ENCODE measurements at regions of chr18 and their contacts with region 1.

Region 1: GRCh38 chr18:4181882-4182568 is 273.1 kb downstream of the DLGAP1 start:
- DNase-seq: no peak
- ATAC-seq: peak; percentile 84
- H3K4me3 ChIP-seq: no peak overlapping the region
- H3K27ac ChIP-seq: no peak overlapping the region
- H3K4me1 ChIP-seq: no peaks in the 10 kb centered on the region
- H3K27me3 ChIP-seq: no peaks in the 10 kb centered on the region
- CTCF ChIP-seq: peak in 1 of 3 experiments; percentile 35; a peak in 2 of 6 replicates
- EP300 ChIP-seq: no peak
- POLR2A ChIP-seq: no peak
- RAD21 ChIP-seq: peak; percentile 38

Region 2: GRCh38 chr18:3952031-3952430 is 230.0 kb before region 1 on chr18:
- CTCF ChIA-PET with region 1: no interaction called
- POLR2A ChIA-PET with region 1: no interaction called
- RAD21 ChIA-PET with region 1: no interaction called
- SMC1A ChIA-PET with region 1: no interaction called
- in situ Hi-C with region 1: no loop called
- intact Hi-C with region 1: no loop called
- DNase-seq: no peak
- ATAC-seq: no peak
- H3K4me3 ChIP-seq: no peak overlapping the region
- H3K27ac ChIP-seq: no peak overlapping the region
- H3K4me1 ChIP-seq: no peaks in the 10 kb centered on the region
- H3K27me3 ChIP-seq: no peaks in the 10 kb centered on the region
- CTCF ChIP-seq: no peak
- EP300 ChIP-seq: no peak
- POLR2A ChIP-seq: no peak
- RAD21 ChIP-seq: no peak

Region 3: DNA sequence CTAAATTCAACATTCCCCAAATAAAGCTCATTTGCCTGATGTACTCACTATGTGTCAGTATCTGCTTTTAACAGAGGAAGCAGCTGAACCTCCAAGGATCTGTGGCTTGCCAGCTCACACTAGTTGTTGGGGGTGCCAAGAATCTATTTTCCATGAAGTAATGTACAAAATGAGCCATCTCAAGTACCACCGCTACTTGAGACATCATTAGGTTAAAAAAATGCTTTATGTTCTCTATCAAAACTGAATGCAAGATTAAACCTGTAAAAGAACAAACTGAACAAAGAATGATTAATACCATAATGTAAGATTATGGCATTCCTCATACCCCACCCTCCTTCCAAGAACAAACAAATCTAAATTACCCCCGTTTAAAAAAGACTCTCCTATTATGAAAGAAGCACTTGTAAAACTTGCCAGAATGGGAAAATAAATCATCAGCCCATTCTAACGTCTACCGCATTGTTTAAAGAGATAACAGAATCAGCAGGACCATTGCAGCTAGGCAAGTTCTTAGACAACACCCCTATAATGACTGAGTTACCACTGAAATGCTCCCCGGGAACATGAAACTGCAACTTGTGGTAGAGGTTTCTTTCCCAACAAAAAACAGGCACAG is 198.6 kb before region 1 on chr18:
- CTCF ChIA-PET with region 1: no interaction called
- POLR2A ChIA-PET with region 1: no interaction called
- RAD21 ChIA-PET with region 1: no interaction called
- SMC1A ChIA-PET with region 1: no interaction called
- in situ Hi-C with region 1: no loop called
- intact Hi-C with region 1: no loop called
- DNase-seq: no peak
- ATAC-seq: peak; percentile 11; the same call in 1 of the 3 replicates
- H3K4me3 ChIP-seq: no peak overlapping the region
- H3K27ac ChIP-seq: no peak overlapping the region
- H3K4me1 ChIP-seq: no peaks in the 10 kb centered on the region
- H3K27me3 ChIP-seq: no peaks in the 10 kb centered on the region
- CTCF ChIP-seq: no peak
- EP300 ChIP-seq: no peak
- POLR2A ChIP-seq: no peak
- RAD21 ChIP-seq: no peak

Region 4: DNA sequence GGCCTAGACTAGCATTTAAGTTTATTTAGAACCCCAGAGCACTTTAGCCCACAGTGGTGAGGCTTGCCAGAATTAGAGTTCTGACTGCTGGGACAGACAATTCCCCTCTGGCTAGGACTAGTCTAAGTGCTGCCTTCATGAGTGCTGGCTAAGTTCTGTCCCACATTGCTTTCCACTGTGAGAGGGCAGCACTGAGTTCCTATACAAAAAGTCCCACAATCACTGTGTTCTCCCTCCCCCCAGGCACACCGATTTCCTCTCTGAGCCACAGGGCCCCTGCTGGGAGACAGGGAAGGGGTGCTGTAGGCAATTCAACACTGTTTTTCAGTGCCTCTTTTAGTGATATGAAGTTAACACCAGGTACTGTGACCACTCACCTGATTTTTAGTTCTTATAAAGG is 37.8 kb before region 1 on chr18:
- CTCF ChIA-PET with region 1: no interaction called
- POLR2A ChIA-PET with region 1: no interaction called
- RAD21 ChIA-PET with region 1: no interaction called
- SMC1A ChIA-PET with region 1: no interaction called
- in situ Hi-C with region 1: no loop called
- intact Hi-C with region 1: no loop called
- DNase-seq: no peak
- ATAC-seq: no peak
- H3K4me3 ChIP-seq: no peak overlapping the region
- H3K27ac ChIP-seq: no peak overlapping the region
- H3K4me1 ChIP-seq: no peaks in the 10 kb centered on the region
- H3K27me3 ChIP-seq: no peaks in the 10 kb centered on the region
- CTCF ChIP-seq: no peak
- EP300 ChIP-seq: no peak
- POLR2A ChIP-seq: no peak
- RAD21 ChIP-seq: no peak

Region 5: DNA sequence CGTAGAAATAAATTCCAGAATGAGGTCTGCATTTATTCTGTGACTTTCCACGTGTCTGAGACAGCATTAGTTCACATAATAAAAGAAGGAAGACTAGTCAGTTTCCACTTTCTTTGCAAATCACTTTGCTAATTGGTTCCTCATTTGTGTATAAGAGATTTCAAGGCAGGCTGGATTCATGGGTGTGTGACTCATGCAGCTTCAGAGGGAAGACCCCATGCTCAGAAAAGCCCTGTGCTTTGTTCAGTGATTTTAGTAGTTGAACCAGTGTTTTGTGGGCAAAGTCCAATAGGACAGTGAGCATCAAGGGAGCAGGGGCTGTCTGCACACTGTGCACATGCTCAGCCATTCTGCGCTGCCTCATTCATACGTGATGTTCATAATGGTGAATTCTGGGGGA is 24.7 kb before region 1 on chr18:
- CTCF ChIA-PET with region 1: interaction called, 8 read pairs
- POLR2A ChIA-PET with region 1: interaction called, 3 read pairs
- RAD21 ChIA-PET with region 1: interaction called, 3 read pairs
- SMC1A ChIA-PET with region 1: interaction called, 10 read pairs
- in situ Hi-C with region 1: no loop called
- intact Hi-C with region 1: no loop called
- DNase-seq: peak; percentile 19
- ATAC-seq: peak; percentile 79
- H3K4me3 ChIP-seq: no peak overlapping the region
- H3K27ac ChIP-seq: no peak overlapping the region
- H3K4me1 ChIP-seq: no peaks in the 10 kb centered on the region
- H3K27me3 ChIP-seq: no peaks in the 10 kb centered on the region
- CTCF ChIP-seq: no peak
- EP300 ChIP-seq: no peak
- POLR2A ChIP-seq: no peak
- RAD21 ChIP-seq: no peak

Region 6: DNA sequence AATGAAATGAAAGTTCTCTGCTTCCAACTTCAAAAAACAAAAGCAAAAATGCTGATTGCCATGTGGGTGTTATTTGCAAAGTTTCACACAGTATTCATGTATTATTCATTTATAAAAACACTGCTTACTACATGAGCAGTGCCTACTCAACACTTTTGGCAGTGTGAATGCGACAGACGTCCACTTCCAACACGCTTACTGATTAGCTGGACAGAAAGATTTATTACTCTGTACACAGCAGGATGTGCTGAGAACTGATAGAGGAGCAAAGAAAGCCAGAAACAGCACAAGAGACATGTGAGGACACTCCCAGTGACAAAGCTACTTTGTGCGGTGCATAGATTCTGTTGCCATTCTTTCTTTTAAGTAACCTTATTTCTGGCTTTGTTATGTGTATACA is 14.3 kb after region 1 on chr18:
- CTCF ChIA-PET with region 1: interaction called, 6 read pairs
- POLR2A ChIA-PET with region 1: interaction called, 9 read pairs
- RAD21 ChIA-PET with region 1: interaction called, 4 read pairs
- SMC1A ChIA-PET with region 1: interaction called, 32 read pairs
- in situ Hi-C with region 1: no loop called
- intact Hi-C with region 1: no loop called
- DNase-seq: no peak
- ATAC-seq: no peak
- H3K4me3 ChIP-seq: no peak overlapping the region
- H3K27ac ChIP-seq: no peak overlapping the region
- H3K4me1 ChIP-seq: no peaks in the 10 kb centered on the region
- H3K27me3 ChIP-seq: no peaks in the 10 kb centered on the region
- CTCF ChIP-seq: no peak
- EP300 ChIP-seq: no peak
- POLR2A ChIP-seq: no peak
- RAD21 ChIP-seq: no peak

Region 7: DNA sequence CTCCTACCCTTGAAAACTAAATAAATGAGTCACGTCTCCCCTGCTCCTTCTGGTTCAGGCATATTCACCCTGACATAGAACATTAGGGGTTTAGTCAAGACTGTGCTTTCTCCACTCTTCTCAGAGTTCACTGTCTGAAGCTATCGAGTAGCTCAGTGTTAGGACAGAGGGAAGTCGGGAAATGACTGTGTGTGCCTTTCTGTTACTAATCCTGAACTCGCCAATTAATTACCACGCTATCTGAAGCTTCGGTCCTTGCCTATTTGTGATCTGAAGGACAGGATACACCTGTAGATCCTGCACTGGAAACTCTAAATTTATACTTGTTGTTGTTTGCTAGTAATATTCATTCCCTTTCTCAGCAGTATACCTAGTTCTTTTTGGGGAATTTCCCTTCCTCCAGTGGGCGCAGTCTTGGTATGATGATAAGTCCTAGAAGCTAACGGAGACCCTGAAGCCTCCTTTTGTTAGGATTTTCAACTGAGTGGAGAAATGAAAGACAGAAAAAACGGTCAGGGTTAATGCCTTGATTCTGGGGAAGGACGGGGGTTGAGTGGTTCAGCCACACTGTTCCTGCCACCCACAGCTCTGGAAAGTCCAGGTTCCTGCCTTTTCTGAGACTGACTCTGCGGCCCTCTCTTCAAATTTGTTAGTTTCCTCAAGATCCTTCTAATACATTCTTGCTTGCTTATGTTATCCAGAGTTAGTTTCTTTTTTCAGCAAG is 55.1 kb after region 1 on chr18:
- CTCF ChIA-PET with region 1: interaction called, 5 read pairs
- POLR2A ChIA-PET with region 1: no interaction called
- RAD21 ChIA-PET with region 1: interaction called, 6 read pairs
- SMC1A ChIA-PET with region 1: interaction called, 22 read pairs
- in situ Hi-C with region 1: no loop called
- intact Hi-C with region 1: no loop called
- DNase-seq: no peak
- ATAC-seq: peak; percentile 77
- H3K4me3 ChIP-seq: no peak overlapping the region
- H3K27ac ChIP-seq: no peak overlapping the region
- H3K4me1 ChIP-seq: no peaks in the 10 kb centered on the region
- H3K27me3 ChIP-seq: no peaks in the 10 kb centered on the region
- CTCF ChIP-seq: no peak
- EP300 ChIP-seq: peak; percentile 28 to 41; a peak in 1 of 4 replicates
- POLR2A ChIP-seq: no peak
- RAD21 ChIP-seq: no peak

Region 8: DNA sequence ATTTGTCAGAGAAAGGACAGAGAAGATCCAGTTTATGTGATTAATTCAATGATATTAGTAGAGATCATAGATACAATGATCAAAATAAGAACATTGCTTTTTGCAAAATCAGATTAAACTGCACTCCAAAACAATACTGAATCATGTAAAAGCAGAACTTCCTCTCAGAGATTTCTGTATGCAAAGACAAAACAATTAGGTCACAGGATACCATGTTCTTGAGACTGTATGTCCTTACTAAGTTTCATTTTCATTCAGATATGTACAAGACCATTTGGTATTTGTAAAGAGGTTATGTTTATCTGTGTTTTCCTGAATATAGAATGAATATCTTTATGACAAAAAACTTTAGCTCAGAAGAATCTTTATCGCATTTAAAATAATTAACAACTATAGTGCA is 111.3 kb after region 1 on chr18:
- CTCF ChIA-PET with region 1: no interaction called
- POLR2A ChIA-PET with region 1: no interaction called
- RAD21 ChIA-PET with region 1: no interaction called
- SMC1A ChIA-PET with region 1: no interaction called
- in situ Hi-C with region 1: no loop called
- intact Hi-C with region 1: no loop called
- DNase-seq: no peak
- ATAC-seq: peak; percentile 88
- H3K4me3 ChIP-seq: no peak overlapping the region
- H3K27ac ChIP-seq: no peak overlapping the region
- H3K4me1 ChIP-seq: no peaks in the 10 kb centered on the region
- H3K27me3 ChIP-seq: no peaks in the 10 kb centered on the region
- CTCF ChIP-seq: no peak
- EP300 ChIP-seq: 0 out of 4 replicates have a peak, but pooled peaks of 1 of the 2 experiments have one; percentile 9
- POLR2A ChIP-seq: no peak
- RAD21 ChIP-seq: no peak

Region 9: GRCh38 chr18:4450065-4450658 is 268.1 kb after region 1 on chr18:
- CTCF ChIA-PET with region 1: interaction called, 3 read pairs
- POLR2A ChIA-PET with region 1: no interaction called
- RAD21 ChIA-PET with region 1: interaction called, 5 read pairs
- SMC1A ChIA-PET with region 1: interaction called, 13 read pairs
- in situ Hi-C with region 1: no loop called
- intact Hi-C with region 1: no loop called
- DNase-seq: no peak
- ATAC-seq: peak; percentile 13
- H3K4me3 ChIP-seq: no peak overlapping the region
- H3K27ac ChIP-seq: no peak overlapping the region
- H3K4me1 ChIP-seq: no peaks in the 10 kb centered on the region
- H3K27me3 ChIP-seq: no peaks in the 10 kb centered on the region
- CTCF ChIP-seq: peak in 2 of 3 experiments; percentile 4 to 43; a peak in 2 of 6 replicates
- EP300 ChIP-seq: no peak
- POLR2A ChIP-seq: no peak
- RAD21 ChIP-seq: no peak